Left cardiac atrium (tissue), 4 donors: ENCODE measurements at regions of chr2 and their contacts with region 1.

Region 1: GRCh38 chr2:10408649-10409579 is 39.2 kb downstream of the ODC1 start:
- DNase-seq: peak; percentile 79
- ATAC-seq: peak; percentile 70 to 75

Region 2: DNA sequence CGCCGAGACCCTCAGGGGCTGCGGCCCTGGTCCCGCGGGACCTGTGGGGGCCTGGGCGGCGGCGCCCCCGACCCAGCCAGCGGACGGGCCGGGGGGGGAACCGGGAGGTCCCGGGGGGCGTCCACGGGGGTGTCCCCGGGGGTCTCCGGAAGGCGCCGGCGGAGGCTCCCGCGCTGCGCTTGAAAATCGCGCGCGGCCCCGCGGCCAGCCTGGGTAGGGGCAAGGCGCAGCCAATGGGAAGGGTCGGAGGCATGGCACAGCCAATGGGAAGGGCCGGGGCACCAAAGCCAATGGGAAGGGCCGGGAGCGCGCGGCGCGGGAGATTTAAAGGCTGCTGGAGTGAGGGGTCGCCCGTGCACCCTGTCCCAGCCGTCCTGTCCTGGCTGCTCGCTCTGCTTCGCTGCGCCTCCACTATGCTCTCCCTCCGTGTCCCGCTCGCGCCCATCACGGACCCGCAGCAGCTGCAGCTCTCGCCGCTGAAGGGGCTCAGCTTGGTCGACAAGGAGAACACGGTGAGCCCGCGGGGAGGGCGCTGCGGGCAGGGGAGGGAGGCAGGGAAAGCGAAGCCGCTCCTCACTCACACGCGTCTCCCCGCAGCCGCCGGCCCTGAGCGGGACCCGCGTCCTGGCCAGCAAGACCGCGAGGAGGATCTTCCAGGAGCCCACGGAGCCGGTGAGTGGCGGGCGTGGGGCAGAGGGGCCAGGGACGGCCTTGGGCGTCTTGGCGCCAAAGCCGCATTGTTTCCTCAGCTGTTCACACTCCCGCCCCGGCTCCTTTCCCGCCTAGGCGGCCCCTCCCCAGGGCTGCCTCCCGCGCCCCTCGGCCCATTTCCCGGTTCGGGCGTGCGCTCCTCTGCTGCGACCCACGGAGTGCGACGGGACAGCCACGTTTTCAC is 286.3 kb before region 1 on chr2 and contains the start of gene RRM2:
- intact Hi-C with region 1: loop called in 1 of 2 experiments (anchors 2 kb)
- DNase-seq: peak; percentile 93
- ATAC-seq: peak; percentile 89 to 96
- total RNA-seq, gene RRM2: 1.0 to 6.1 TPM

Region 3: GRCh38 chr2:10141736-10142642 is 266.9 kb before region 1 on chr2:
- intact Hi-C with region 1: loop called in 1 of 2 experiments (anchors 5 kb)
- DNase-seq: no peak
- ATAC-seq: peak; percentile 42 to 56

Region 4: GRCh38 chr2:10302479-10303180 is 106.3 kb before region 1 on chr2 and contains the start of gene HPCAL1:
- intact Hi-C with region 1: loop called (anchors 2 to 5 kb)
- DNase-seq: peak; percentile 89
- ATAC-seq: peak; percentile 93 to 95
- total RNA-seq, gene HPCAL1: 27.2 to 27.4 TPM

Region 5: GRCh38 chr2:10329880-10330699 is 78.8 kb before region 1 on chr2:
- intact Hi-C with region 1: loop called in 1 of 2 experiments (anchors 5 kb)
- DNase-seq: no peak
- ATAC-seq: no peak